A549 (cell line): ENCODE measurements at regions of chr5 and their contacts with region 1.

Region 1: GRCh38 chr5:73201547-73202513 is 28.8 kb downstream of the TMEM174 start:
- DNase-seq: peak; percentile 88 to 92
- ATAC-seq: peak; percentile 94 to 99
- H3K4me3 ChIP-seq: peak overlapping the region; percentile 42
- H3K27ac ChIP-seq: peak overlapping the region; percentile 58 to 80
- H3K4me1 ChIP-seq: 0 out of 3 replicates have a peak, but pooled peaks cover 3% of the 10 kb centered on the region
- CTCF ChIP-seq: peak; percentile 83
- EP300 ChIP-seq: no peak
- POLR2A ChIP-seq: peak; percentile 45
- RAD21 ChIP-seq: peak; percentile 84

Region 2: DNA sequence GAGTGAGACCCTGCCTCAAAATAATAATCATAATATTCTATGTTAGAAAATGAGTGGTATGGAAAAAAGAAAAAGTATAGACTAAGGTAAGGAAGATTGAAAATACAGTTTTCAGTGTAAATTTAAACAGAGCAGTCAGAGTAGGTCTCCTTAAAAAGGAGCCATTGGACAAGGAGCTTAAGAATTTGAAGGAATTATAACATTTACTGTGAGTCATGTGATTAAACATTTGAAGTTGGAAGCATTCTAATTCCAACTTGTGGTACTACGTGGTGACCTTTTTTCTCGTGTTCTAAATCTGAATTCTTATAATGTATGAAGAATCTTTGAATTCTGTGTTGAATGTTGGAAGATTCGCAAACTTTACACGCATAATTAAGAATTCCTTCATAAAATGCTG is 120.7 kb before region 1 on chr5:
- CTCF ChIA-PET with region 1: interaction called, 32 read pairs
- POLR2A ChIA-PET with region 1: no interaction called
- DNase-seq: no peak
- ATAC-seq: no peak
- H3K4me3 ChIP-seq: no peak overlapping the region
- H3K27ac ChIP-seq: no peak overlapping the region
- H3K4me1 ChIP-seq: no peaks in the 10 kb centered on the region
- CTCF ChIP-seq: no peak
- EP300 ChIP-seq: no peak
- POLR2A ChIP-seq: no peak
- RAD21 ChIP-seq: no peak

Region 3: GRCh38 chr5:73088026-73088425 is 113.8 kb before region 1 on chr5:
- CTCF ChIA-PET with region 1: interaction called, 32 read pairs
- POLR2A ChIA-PET with region 1: no interaction called
- DNase-seq: no peak
- ATAC-seq: peak in 1 of 2 experiments; percentile 39; a peak in 1 of 6 replicates
- H3K4me3 ChIP-seq: no peak overlapping the region
- H3K27ac ChIP-seq: peak overlapping the region in 1 of 2 experiments; percentile 13; a peak in 2 of 6 replicates
- H3K4me1 ChIP-seq: peaks cover 22% of the 10 kb centered on the region
- CTCF ChIP-seq: no peak
- EP300 ChIP-seq: no peak
- POLR2A ChIP-seq: no peak
- RAD21 ChIP-seq: no peak

Region 4: GRCh38 chr5:73093943-73094342 is 107.9 kb before region 1 on chr5:
- CTCF ChIA-PET with region 1: interaction called, 11 read pairs
- POLR2A ChIA-PET with region 1: no interaction called
- DNase-seq: peak in 1 of 2 experiments; percentile 49
- ATAC-seq: peak; percentile 82 to 92
- H3K4me3 ChIP-seq: no peak overlapping the region
- H3K27ac ChIP-seq: peak overlapping the region in 1 of 2 experiments; percentile 44; a peak in 1 of 6 replicates
- H3K4me1 ChIP-seq: peaks cover 17% of the 10 kb centered on the region
- CTCF ChIP-seq: no peak
- EP300 ChIP-seq: no peak
- POLR2A ChIP-seq: no peak
- RAD21 ChIP-seq: no peak

Region 5: DNA sequence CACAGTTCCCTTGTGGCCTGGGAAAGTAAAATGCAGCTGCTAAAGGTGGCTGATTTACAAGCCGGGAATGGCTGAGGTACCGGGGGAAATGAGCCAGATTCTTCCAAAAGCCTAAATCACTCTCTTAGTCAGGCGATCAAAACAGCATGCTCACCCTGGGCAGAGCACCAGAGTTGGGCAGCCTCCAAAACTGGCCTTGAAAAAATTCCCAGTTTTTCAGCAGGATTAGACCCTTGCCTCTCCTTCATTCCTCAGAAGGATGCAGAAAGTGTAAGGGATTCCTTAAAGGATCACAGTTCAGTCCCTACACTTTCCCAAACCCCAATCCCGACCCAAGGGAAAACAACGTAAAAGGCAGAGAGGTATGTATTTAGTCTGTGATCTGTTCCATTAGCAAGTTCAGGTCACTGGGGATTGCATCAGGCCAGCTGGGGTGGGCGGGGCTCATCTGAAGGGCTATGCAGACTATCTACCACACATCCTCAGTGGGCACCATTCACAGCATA is 11.9 kb before region 1 on chr5:
- CTCF ChIA-PET with region 1: interaction called, 11 read pairs
- POLR2A ChIA-PET with region 1: no interaction called
- DNase-seq: no peak
- ATAC-seq: 0 out of 6 replicates have a peak, but pooled peaks of 1 of the 2 experiments have one; percentile 49
- H3K4me3 ChIP-seq: no peak overlapping the region
- H3K27ac ChIP-seq: peak overlapping the region in 1 of 2 experiments; percentile 25; a peak in 1 of 6 replicates
- H3K4me1 ChIP-seq: peaks cover 8% of the 10 kb centered on the region; the same call in 2 of the 3 replicates
- CTCF ChIP-seq: no peak
- EP300 ChIP-seq: no peak
- POLR2A ChIP-seq: no peak
- RAD21 ChIP-seq: no peak